CD14-positive monocyte (primary cell): ENCODE measurements at regions of chr5 and their contacts with region 1.

Region 1: DNA sequence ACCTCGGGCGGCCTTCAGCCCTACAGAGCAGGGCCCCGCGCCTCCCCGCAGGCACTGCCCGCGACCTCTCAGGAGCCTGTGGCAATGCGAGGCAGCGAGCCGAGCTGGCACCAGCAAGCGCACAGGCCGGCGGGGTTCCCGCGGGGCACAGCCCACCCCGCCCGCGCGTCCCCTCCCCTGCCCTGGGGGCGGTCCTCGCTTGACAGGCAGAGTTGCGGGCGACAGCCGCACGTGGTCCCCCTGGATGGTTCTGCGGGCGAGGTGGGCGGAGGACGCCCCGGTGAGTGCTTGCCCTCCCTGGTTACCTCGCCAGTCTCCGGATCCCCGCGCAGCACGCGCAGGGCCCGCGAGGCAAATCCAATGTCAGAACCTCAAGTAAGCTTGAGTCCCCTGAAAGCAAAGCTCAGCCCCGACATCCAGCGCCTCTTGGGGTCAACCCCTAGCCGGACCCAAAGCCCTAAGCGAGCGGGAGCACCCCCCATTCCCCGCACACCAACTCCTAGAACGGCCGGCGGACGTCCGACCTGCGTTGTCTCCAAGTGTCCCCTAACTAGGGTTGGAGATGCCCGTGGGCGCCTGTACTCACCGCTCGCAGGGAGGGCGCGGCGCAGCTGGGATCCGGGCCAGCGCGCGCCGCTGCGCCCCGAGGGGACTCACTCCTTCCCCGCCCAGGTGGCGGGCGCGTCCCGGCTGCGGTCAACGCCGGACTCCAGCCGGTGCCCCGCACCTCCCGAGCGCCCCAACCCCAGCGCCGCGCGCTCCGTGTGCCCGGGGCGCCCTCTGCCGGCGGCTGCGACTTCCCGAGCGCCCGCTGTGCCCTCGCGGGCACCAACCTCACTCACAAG is at the start of gene DRD1:
- DNase-seq: peak in 1 of 3 donors; percentile 8
- H3K4me3 ChIP-seq: no peak within 1 kb of the TSS
- H3K4me3 Mint-ChIP-seq: peak within 1 kb of the TSS in 1 of 2 donors; percentile 80
- H3K27ac ChIP-seq: no peak within 1 kb of the TSS
- H3K27ac Mint-ChIP-seq: no peak within 1 kb of the TSS
- H3K4me1 ChIP-seq: peaks cover 0 to 4% of the 10 kb centered on the region in 2 donors
- H3K4me1 Mint-ChIP-seq: peaks cover 3% of the 10 kb centered on the region
- H3K27me3 ChIP-seq: peaks cover 15 to 66% of the 10 kb centered on the region in 2 donors
- H3K27me3 Mint-ChIP-seq: peaks cover 47 to 70% (median 57%) of the 10 kb centered on the region in 3 donors
- CTCF ChIP-seq: peak; percentile 73
- polyA plus RNA-seq, gene DRD1: not detected

Region 2: GRCh38 chr5:174951146-174951780 is 493.0 kb before region 1 on chr5:
- intact Hi-C with region 1: loop called in 1 of 2 experiments (anchors 5 kb)
- DNase-seq: peak in 2 of 3 donors; percentile 14 to 19
- H3K4me3 ChIP-seq: no peak overlapping the region
- H3K4me3 Mint-ChIP-seq: no peak overlapping the region
- H3K27ac ChIP-seq: no peak overlapping the region
- H3K27ac Mint-ChIP-seq: no peak overlapping the region
- H3K4me1 ChIP-seq: no peaks in the 10 kb centered on the region
- H3K4me1 Mint-ChIP-seq: no peaks in the 10 kb centered on the region
- H3K27me3 ChIP-seq: no peaks in the 10 kb centered on the region
- H3K27me3 Mint-ChIP-seq: peaks cover 0 to 4% (median 0%) of the 10 kb centered on the region in 3 donors
- CTCF ChIP-seq: peak; percentile 69